ENCODE measurements at regions of chr11 and their contacts with region 1.

Region 1: DNA sequence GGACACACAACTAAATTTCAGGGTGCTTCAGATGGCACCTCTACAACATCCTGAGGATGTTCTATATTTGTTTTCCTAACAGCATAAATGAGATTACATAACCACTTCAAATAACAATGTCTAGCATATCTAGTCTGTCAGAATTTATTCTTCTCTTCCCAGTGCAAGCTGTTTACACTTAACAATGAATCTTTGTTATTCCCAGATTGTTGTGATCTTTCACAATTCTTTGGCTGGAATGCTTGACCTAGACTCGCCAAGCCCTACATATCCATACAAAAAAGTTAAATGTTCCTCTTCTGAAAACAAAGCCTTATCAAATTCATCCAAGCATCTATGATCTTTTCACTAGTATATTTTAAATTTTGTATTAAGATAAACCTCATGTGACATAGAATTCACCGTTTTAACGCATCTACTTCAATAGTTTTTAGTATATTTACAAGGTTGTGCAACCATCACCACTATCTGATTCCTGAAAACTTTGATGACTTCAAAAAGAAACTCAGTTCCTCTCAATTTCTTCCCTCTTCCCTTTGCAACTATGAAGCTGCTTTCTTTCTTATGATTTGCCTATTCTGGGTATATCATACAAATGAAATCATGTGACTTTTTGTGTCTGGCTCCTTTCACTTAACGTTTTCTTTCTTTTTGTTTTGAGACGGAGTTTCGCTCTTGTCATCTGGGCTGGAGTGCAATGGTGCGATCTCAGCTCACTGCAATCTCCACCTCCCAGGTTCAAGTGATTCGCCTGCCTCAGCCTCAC is 61.7 kb upstream of the CHRNA10 start:
- DNase-seq: no peak
- ATAC-seq: no peak
- H3K4me3 ChIP-seq: no peak overlapping the region
- H3K27ac ChIP-seq: peak overlapping the region in 1 of 12 donors; percentile 30
- H3K4me1 ChIP-seq: peaks cover 0 to 4% (median 0%) of the 10 kb centered on the region in 12 donors
- H3K27me3 ChIP-seq: no peaks in the 10 kb centered on the region
- CTCF ChIP-seq: no peak
- POLR2A ChIP-seq: no peak

Region 2: DNA sequence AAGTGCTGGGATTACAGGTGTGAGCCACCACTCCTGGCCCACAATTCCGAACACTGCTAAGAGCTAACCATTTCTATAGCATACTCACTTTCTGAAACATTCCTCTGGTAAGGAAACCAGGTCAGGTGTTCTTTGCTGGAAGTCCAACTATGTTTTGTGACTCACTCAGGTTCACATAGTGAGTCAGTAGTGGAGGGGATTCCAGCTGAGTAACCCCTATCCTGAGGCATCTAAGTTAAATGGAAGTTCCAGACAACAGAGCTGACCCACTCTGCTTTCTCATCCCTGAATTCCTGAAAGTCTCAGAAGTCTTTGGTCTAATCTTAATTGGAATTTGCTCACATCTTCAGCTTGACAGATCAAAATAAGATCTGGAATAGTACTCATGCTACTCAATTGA is 58.7 kb before region 1 on chr11:
- intact Hi-C with region 1: no loop called
- DNase-seq: no peak
- ATAC-seq: no peak
- H3K4me3 ChIP-seq: no peak overlapping the region
- H3K27ac ChIP-seq: no peak overlapping the region
- H3K4me1 ChIP-seq: peaks cover 0 to 21% (median 0%) of the 10 kb centered on the region in 12 donors
- H3K27me3 ChIP-seq: no peaks in the 10 kb centered on the region
- CTCF ChIP-seq: no peak
- POLR2A ChIP-seq: no peak

Region 3: DNA sequence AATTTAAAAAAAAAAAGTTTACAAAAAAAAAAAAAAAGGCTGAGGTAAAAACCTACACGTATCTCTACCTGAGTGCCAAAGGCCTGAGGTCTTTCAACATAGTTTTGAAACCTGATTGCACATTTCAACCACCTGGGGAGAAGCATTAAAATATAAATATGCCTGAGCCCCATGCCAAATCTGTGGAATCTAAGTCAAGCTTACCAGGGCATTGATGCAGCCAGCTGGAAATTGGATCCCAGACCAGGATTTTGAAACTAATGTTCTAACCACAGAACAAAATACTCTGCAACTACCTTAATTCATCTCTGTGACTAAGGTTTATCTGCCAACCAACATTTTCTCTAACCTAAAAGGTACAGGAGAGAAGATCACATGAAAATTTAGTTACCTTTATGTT is 22.9 kb before region 1 on chr11:
- intact Hi-C with region 1: loop called in 1 of 10 experiments (anchors 1 kb)
- DNase-seq: no peak
- ATAC-seq: no peak
- H3K4me3 ChIP-seq: no peak overlapping the region
- H3K27ac ChIP-seq: no peak overlapping the region
- H3K4me1 ChIP-seq: peaks cover 0 to 3% (median 0%) of the 10 kb centered on the region in 12 donors
- H3K27me3 ChIP-seq: no peaks in the 10 kb centered on the region
- CTCF ChIP-seq: no peak
- POLR2A ChIP-seq: no peak

Measured in heart left ventricle (tissue), 16 donors.